Heart right ventricle (tissue), 16 donors: ENCODE measurements at regions of chr6 and their contacts with region 1.

Region 1: DNA sequence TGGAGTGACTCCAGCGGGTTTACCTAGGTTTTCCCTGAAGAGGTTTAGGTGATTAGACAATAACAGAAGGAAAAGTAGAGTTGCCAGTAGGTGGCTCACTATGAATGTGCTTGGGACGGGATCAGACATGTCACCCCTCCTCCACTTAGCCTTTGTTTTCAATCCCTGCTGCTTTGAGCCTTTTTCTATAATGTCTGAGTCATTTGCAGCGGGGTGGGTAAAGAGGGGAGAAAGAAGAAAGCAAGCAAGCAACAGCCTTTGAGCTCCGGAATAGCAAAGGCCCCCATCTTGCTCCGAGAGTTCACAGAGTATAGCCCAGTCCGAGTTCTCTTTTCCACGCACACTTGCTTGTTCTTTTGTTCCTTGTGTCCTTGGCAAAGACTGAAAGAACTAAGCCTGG is 129.1 kb downstream of the PACRG start:
- DNase-seq: peak in 1 of 2 donors; percentile 55
- ATAC-seq: peak; percentile 76 to 92 (median 89)
- H3K4me3 ChIP-seq: peak overlapping the region in 8 of 10 donors; percentile 1 to 43 (median 36)
- H3K27ac ChIP-seq: peak overlapping the region in 9 of 10 donors; percentile 6 to 74 (median 54)
- H3K4me1 ChIP-seq: peaks cover 0 to 10% (median 0%) of the 10 kb centered on the region in 9 donors
- H3K27me3 ChIP-seq: no peaks in the 10 kb centered on the region
- CTCF ChIP-seq: peak in 8 of 9 donors; percentile 17 to 75 (median 58)

Region 2: GRCh38 chr6:162109480-162110050 is 747.3 kb before region 1 on chr6:
- intact Hi-C with region 1: loop called in 1 of 10 experiments (anchors 5 kb)
- DNase-seq: no peak
- ATAC-seq: peak in 3 of 8 donors; percentile 55 to 67 (median 61)
- H3K4me3 ChIP-seq: no peak overlapping the region
- H3K27ac ChIP-seq: no peak overlapping the region
- H3K4me1 ChIP-seq: peaks cover 0 to 8% (median 0%) of the 10 kb centered on the region in 9 donors
- H3K27me3 ChIP-seq: no peaks in the 10 kb centered on the region
- CTCF ChIP-seq: no peak

Region 3: DNA sequence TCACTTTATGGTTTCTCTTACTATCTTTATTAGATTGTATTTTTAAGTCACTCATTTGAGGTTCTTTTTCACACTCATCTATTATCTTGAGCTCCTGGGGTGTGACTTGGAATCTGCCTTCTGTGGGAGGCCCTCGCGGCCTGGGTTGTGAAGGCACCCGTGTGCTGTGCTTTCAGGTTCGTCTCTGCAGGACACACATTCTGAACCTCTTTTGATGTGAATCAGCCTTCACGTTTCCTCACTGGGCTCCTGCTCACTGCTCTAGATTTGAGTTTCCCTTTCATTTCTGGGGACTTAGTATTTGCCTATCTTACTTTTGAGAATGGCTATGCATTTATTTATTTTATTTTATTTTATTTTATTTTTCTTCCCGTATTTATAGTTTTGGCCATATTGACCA is 31.3 kb before region 1 on chr6:
- intact Hi-C with region 1: no loop called
- DNase-seq: no peak
- ATAC-seq: no peak
- H3K4me3 ChIP-seq: no peak overlapping the region
- H3K27ac ChIP-seq: no peak overlapping the region
- H3K4me1 ChIP-seq: no peaks in the 10 kb centered on the region
- H3K27me3 ChIP-seq: no peaks in the 10 kb centered on the region
- CTCF ChIP-seq: no peak

Region 4: GRCh38 chr6:163063561-163063960 is 206.7 kb after region 1 on chr6:
- intact Hi-C with region 1: no loop called
- DNase-seq: no peak
- ATAC-seq: no peak
- H3K4me3 ChIP-seq: no peak overlapping the region
- H3K27ac ChIP-seq: no peak overlapping the region
- H3K4me1 ChIP-seq: peaks cover 0 to 10% (median 0%) of the 10 kb centered on the region in 9 donors
- H3K27me3 ChIP-seq: no peaks in the 10 kb centered on the region
- CTCF ChIP-seq: no peak

Region 5: GRCh38 chr6:163170294-163170883 is 313.5 kb after region 1 on chr6:
- intact Hi-C with region 1: loop called in 1 of 10 experiments (anchors 10 kb)
- DNase-seq: no peak
- ATAC-seq: peak in 1 of 8 donors; percentile 37
- H3K4me3 ChIP-seq: no peak overlapping the region
- H3K27ac ChIP-seq: no peak overlapping the region
- H3K4me1 ChIP-seq: no peaks in the 10 kb centered on the region
- H3K27me3 ChIP-seq: no peaks in the 10 kb centered on the region
- CTCF ChIP-seq: peak; percentile 16 to 69 (median 55)

Region 6: DNA sequence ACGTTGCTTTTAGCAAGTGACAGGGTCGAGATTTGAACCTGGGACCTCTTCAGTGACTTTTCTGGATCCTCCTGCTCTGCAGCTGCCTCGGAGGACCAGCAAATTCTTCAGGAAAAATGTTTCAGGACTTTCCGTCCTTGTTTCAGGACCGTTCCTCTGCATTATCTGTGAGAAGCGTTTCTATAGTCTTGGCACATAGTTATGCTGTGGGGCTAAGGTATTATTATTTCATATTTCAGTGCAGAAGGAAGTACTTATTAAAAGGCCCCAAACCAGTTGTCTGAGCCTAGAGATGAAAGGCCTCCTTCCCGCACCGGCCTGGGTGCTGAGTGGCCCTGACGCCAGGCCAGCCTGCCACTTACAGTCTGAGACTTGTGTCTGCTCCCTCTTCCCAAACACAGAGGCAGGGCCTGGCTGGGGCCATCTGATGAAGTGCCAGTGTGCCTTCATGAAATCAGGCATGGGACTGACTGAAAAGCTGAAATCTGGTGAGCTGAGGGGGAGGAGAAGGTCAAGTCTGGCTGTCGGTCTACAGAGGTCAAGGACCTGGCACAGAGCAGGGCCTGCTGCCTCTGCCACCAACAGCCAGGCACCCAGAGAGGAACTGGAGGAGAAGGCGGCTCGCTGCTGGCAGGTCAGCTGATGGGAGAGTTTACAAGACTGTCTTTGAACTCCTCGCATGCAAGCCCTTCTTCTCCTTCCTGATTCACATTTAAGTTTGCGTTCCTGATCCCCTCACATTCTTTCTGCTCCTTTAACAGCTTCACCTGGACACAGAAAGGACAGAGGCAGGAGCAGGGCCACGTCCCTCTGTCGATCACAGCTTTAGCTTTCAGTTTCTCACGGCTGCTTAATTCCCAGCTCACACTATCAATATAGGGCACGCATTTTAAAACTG is 548.8 kb after region 1 on chr6:
- intact Hi-C with region 1: loop called in 4 of 10 experiments (anchors 10 kb)
- DNase-seq: peak; percentile 68 to 69
- ATAC-seq: peak; percentile 86 to 93 (median 91)
- H3K4me3 ChIP-seq: peak overlapping the region in 9 of 10 donors; percentile 13 to 50 (median 39)
- H3K27ac ChIP-seq: peak overlapping the region; percentile 75 to 95 (median 92)
- H3K4me1 ChIP-seq: peaks cover 11 to 51% (median 32%) of the 10 kb centered on the region in 9 donors
- H3K27me3 ChIP-seq: no peaks in the 10 kb centered on the region
- CTCF ChIP-seq: no peak